Activated CD8-positive, alpha-beta T cell treated with anti-CD3 and anti-CD28 coated beads, Interleukin-2, amount 10 ng/mL, durations not matched to agents 7 days and 5 days (primary cell): ENCODE measurements at regions of chr1 and their contacts with region 1.

Region 1: GRCh38 chr1:234309598-234310459 is 63.4 kb upstream of the COA6 start:
- DNase-seq: peak; percentile 81
- ATAC-seq: peak; percentile 84
- H3K4me3 Mint-ChIP-seq: no peak overlapping the region
- H3K27ac Mint-ChIP-seq: no peak overlapping the region
- H3K4me1 Mint-ChIP-seq: peaks cover 13% of the 10 kb centered on the region
- H3K27me3 Mint-ChIP-seq: no peaks in the 10 kb centered on the region

Region 2: DNA sequence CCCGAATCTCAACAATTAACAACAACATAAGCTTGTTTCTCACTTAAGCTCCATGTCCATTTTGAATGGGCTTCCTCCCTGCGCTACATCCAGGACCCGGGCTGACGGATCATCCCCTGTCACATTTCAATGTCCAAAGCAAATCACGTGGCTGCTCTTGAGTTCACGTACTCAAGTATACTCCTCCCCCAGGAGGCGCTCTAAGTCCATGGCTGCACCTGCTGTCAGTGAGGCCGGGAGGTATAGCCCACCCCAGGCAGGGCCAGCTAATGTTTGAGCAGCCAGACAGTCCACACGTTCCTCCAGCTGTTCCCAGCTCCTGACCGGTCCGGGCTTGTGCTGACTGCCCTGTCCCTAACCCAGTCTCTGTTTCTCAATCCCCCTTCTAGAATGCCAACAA is 184.5 kb before region 1 on chr1:
- CTCF ChIA-PET with region 1: interaction called, 59 read pairs
- POLR2A ChIA-PET with region 1: no interaction called
- DNase-seq: peak; percentile 73
- ATAC-seq: peak; percentile 73
- H3K4me3 Mint-ChIP-seq: no peak overlapping the region
- H3K27ac Mint-ChIP-seq: no peak overlapping the region
- H3K4me1 Mint-ChIP-seq: no peaks in the 10 kb centered on the region
- H3K27me3 Mint-ChIP-seq: peaks cover 30% of the 10 kb centered on the region

Region 3: DNA sequence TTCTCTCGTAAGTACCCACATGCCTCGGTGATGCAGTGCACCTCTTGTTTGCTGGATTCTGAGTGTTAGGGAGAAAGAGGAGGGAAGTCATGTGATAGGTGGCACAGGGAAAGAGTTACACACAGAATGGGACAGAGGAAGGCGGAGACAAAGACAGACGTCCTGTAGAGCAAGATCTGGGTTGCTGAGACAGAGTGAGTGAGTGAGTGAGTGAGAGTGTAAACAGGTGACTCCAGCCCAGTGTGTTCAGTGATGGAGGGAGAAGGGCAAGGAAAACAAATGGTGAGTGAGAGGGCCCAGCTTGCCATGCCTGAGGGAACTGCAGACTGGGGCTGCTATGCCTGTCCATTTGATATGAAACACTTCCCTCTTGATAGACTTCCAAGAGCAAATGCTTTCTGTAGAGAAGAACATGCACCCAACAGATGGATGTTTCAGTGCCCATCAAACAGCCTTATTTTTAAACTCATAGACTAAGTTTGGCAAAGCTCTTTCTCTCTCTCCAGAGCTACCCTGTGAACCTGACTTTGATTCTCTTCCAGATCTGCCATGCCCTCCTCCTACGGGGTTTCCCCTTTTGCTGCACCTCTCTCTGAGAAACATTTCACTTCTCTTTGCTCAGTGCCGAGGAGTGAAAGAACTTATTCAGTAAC is 146.4 kb before region 1 on chr1:
- CTCF ChIA-PET with region 1: interaction called, 11 read pairs
- POLR2A ChIA-PET with region 1: interaction called, 3 read pairs
- DNase-seq: no peak
- ATAC-seq: no peak
- H3K4me3 Mint-ChIP-seq: no peak overlapping the region
- H3K27ac Mint-ChIP-seq: no peak overlapping the region
- H3K4me1 Mint-ChIP-seq: peaks cover 40% of the 10 kb centered on the region
- H3K27me3 Mint-ChIP-seq: peaks cover 5% of the 10 kb centered on the region

Region 4: DNA sequence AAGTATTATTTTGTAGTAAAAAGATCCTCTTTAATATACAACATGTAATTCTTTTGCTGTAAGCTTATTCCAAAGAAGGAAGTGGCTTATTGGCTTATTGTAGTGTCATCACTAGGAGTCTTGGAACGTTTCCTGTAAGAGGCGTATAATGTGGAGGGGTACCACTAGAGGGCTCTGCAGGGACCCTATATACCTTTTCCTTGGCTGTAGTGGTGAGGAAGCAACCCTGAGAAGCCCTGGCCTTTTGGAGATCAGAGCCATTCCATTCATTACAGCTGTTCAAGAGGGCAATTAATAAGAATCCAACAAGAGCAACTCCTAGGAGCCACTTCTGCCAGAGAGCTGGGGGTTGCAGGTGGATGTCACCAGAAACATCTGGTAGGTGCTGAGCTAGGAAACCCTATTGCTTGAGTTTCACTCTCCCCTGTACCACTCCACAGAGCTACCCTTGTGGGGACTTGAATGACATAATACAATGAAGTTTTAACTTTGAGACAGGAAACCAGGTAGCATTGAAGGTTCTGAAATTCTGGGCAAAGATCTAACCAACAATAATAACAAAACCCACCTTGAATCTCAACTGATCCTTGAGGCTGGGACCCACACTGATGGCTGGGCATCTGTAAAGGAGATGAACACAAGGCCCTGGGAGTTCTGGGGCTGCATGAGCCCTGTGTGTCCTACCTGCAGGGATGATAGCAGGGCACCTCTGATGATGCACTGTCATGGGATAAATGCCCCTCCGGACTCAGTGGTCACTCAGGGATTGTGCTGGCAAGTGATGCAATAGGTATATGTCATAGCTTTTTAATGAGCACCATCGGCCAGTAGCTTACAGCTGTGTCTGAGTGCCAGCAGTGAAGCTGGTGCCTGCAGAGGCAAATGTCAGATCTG is 96.8 kb before region 1 on chr1:
- CTCF ChIA-PET with region 1: interaction called, 180 read pairs
- POLR2A ChIA-PET with region 1: no interaction called
- DNase-seq: peak; percentile 64
- ATAC-seq: peak; percentile 64
- H3K4me3 Mint-ChIP-seq: peak overlapping the region; percentile 82
- H3K27ac Mint-ChIP-seq: peak overlapping the region; percentile 82
- H3K4me1 Mint-ChIP-seq: peaks cover 48% of the 10 kb centered on the region
- H3K27me3 Mint-ChIP-seq: peaks cover 10% of the 10 kb centered on the region

Region 5: DNA sequence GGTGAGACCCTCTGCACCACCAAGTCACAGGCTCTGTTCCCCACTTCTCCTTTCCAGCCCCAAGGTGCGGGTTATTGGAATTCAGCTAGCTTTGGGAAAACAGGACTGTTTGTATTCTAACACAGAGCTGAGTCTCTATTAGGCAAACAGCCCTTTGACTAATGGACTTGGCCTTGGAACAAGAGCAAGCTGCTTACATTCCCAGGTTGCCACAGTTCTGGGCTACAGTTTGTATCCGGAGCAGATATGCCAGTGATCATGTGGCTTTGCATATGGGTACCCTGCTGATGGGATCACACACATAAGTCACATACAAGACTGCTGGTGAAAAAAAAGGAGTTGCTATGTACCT is 47.1 kb before region 1 on chr1:
- CTCF ChIA-PET with region 1: interaction called, 10 read pairs
- POLR2A ChIA-PET with region 1: no interaction called
- DNase-seq: no peak
- ATAC-seq: no peak
- H3K4me3 Mint-ChIP-seq: no peak overlapping the region
- H3K27ac Mint-ChIP-seq: no peak overlapping the region
- H3K4me1 Mint-ChIP-seq: peaks cover 14% of the 10 kb centered on the region
- H3K27me3 Mint-ChIP-seq: peaks cover 2% of the 10 kb centered on the region

Region 6: GRCh38 chr1:234320069-234320468 is 10.2 kb after region 1 on chr1:
- CTCF ChIA-PET with region 1: interaction called, 30 read pairs
- POLR2A ChIA-PET with region 1: no interaction called
- DNase-seq: no peak
- ATAC-seq: no peak
- H3K4me3 Mint-ChIP-seq: no peak overlapping the region
- H3K27ac Mint-ChIP-seq: no peak overlapping the region
- H3K4me1 Mint-ChIP-seq: peaks cover 14% of the 10 kb centered on the region
- H3K27me3 Mint-ChIP-seq: no peaks in the 10 kb centered on the region